Esophagus muscularis mucosa (tissue), 4 donors: ENCODE measurements at regions of chr14 and their contacts with region 1.

Region 1: DNA sequence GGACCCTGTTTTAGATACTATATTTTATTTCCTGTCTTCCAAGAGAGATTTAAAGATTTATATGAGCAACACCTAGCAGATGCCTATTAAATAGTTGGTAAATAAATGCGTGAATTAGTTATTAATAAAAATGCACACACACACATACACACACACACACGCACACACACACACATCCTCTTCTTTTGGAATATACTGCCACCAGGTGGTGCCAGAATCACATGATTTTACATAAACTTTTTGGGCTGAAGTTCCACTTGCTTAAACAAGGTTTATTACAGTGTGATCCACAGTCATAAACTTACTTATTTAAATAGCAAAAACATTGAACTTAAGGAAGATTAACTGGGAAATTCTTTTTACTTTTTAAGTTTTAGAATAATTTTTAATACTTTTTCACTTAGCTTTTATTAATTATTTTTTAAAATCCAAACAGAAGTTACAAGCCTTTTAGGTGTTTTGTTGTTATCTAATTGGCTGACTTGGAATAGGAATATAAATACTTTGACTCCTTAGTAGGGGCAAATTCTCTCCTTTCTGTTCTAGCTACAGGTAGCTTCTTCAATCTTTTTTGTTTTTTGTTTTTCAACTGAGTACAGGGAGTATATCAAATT is 17.5 kb downstream of the RAD51B start:
- DNase-seq: no peak
- H3K4me3 ChIP-seq: no peak overlapping the region
- H3K27ac ChIP-seq: no peak overlapping the region
- H3K4me1 ChIP-seq: no peaks in the 10 kb centered on the region
- H3K27me3 ChIP-seq: no peaks in the 10 kb centered on the region
- CTCF ChIP-seq: peak; percentile 46 to 69 (median 57)
- EP300 ChIP-seq: no peak
- POLR2A ChIP-seq: no peak

Region 2: GRCh38 chr14:68824517-68825347 is 987.6 kb after region 1 on chr14:
- intact Hi-C with region 1: loop called (anchors 5 kb)
- DNase-seq: no peak
- H3K4me3 ChIP-seq: peak overlapping the region in 2 of 4 donors; percentile 2 to 36
- H3K27ac ChIP-seq: no peak overlapping the region
- H3K4me1 ChIP-seq: peaks cover 8 to 15% (median 13%) of the 10 kb centered on the region in 4 donors
- H3K27me3 ChIP-seq: no peaks in the 10 kb centered on the region
- CTCF ChIP-seq: peak; percentile 78 to 92 (median 79)
- EP300 ChIP-seq: no peak
- POLR2A ChIP-seq: no peak

Region 3: DNA sequence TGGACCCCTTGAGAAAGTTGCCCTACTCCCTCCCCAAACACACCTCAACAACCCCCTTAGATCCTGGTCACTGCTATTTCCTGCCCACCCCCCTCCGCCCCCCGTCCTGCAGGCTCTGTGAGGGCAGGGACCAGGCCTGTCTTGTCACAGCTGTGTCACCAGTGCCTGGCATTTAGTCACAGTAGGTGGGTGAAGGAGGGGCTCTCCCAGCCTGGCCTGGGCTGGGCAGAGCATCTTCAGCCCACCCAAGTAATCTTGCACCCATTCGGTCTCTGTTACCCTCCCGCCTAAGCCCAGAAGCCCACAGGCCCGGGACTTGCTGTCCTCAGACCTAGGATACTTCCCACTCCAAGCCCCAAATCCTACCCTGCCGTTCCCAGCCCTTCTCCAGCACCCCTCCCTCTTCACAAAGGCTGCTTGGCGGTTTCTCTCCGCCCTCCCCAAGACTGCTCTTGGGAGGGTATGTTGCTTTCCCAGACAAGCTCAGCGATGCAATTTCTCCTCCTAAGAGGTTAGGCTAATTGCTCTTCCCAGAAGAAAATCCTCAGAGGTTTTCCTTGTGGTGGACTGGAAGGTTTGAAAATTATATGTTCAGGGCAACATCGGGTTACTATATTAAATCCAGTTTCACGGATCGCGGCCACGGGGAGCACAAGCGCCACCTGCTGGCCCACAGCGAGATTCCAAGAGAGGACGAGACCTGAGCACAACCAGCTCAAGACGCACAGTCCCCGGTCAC is 1006.5 kb after region 1 on chr14:
- intact Hi-C with region 1: loop called (anchors 5 kb)
- DNase-seq: peak; percentile 96
- H3K4me3 ChIP-seq: peak overlapping the region; percentile 38 to 48 (median 43)
- H3K27ac ChIP-seq: peak overlapping the region; percentile 64 to 75 (median 70)
- H3K4me1 ChIP-seq: peaks cover 4 to 38% (median 36%) of the 10 kb centered on the region in 4 donors
- H3K27me3 ChIP-seq: no peaks in the 10 kb centered on the region
- CTCF ChIP-seq: peak; percentile 86 to 93 (median 89)
- EP300 ChIP-seq: no peak
- POLR2A ChIP-seq: no peak